Gastrocnemius medialis (tissue), 4 donors: ENCODE measurements at regions of chr2 and their contacts with region 1.

Region 1: DNA sequence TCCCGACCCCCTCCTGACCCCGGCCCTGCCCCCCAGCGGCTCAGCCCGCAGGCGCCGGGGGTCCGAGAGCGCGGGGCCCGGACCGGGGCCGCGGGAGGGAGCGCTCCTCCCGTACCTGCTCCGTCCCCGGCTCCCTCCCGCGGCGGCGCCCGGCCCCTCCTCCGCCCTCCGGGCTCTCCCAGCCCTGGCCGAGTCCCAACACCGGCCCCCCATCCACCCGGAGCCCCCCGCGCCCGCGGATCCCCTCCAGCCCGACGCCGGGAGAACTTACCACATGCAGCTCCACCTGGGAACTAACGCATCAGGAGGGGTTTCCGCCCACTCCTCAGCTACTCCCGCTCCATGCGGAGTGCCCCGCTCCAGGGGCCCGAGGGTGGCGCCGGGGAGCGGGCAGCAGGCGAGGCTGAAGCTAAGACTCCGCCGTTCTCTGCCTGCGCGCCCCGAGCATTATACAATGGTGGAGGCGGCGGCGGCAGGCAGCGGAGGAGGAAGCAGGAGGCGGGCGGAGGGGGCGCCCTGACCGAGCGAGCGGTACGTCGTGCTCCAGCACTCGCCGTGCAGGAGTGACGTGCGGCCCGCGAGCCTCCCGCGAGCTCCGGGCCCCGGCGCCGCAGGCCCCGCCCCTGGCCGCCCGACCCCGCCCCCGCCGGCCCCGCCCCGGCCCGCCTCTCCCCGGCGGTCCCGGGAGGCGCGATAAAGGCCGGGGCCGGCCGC is at the start of gene SERTAD2:
- DNase-seq: peak; percentile 74 to 84
- ATAC-seq: peak; percentile 64 to 70
- H3K4me3 ChIP-seq: peak within 1 kb of the TSS; percentile 87 to 95 (median 90)
- H3K27ac ChIP-seq: peak within 1 kb of the TSS; percentile 96 to 100 (median 99)
- H3K4me1 ChIP-seq: peaks cover 41% of the 10 kb centered on the region in 2 donors
- H3K27me3 ChIP-seq: no peaks in the 10 kb centered on the region
- CTCF ChIP-seq: peak in 2 of 5 experiments; percentile 17 to 35
- POLR2A ChIP-seq: peak; percentile 92 to 95
- total RNA-seq, gene SERTAD2: 7.3 to 10.6 (median 8.7) TPM

Region 2: DNA sequence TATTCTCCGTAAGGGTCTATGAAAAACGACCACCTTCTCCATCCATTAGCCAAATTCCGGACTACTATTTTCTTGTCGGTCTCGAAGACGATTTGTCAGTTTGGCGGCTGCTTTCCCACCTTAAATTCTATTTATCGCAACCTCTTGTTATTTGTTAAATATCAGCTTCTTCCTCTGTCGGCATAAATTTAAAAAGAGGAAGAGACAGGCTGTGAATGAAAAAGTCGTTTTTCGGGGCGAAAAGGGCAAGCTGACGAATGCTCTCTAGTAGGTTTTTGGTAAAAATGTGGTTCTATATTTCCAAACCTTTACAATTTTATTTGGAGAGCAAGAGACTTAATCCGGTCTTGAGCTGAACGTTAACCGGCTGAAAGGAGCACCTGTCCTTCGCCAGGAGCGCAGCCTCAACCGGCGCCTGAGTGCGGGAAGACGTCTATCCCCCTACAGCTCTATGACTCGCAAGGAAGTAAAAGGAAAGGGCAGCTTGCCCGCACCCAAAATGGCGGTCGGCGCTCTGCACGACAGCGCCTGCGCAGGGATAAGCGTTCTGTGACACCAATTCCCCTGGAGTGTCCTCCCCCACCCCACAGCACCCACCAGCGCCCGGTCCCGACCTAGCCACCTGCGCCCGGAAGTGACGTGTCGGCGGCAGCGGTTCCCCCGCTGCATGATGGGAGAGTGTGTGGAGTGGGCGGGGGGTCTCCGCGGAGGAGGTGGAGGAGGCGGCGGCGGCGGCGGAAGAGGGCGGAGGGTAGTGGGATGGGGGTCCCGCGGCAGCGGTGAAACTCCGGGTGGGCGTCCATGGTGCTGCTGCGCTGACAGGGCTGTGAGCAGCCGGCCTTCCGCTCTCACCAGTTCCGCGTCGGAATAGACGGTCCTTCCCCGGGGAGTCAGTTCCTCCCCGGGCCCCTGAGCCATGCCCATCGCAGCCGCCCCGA is 129.6 kb before region 1 on chr2 and contains the start of gene AFTPH:
- in situ Hi-C with region 1: loop called in 1 of 4 experiments (anchors 10 kb)
- intact Hi-C with region 1: loop called (anchors 2 kb)
- DNase-seq: peak; percentile 99
- ATAC-seq: peak; percentile 94 to 95
- H3K4me3 ChIP-seq: peak within 1 kb of the TSS; percentile 86 to 97 (median 90)
- H3K27ac ChIP-seq: peak within 1 kb of the TSS; percentile 91 to 97 (median 94)
- H3K4me1 ChIP-seq: peaks cover 29 to 32% of the 10 kb centered on the region in 2 donors
- H3K27me3 ChIP-seq: no peaks in the 10 kb centered on the region
- CTCF ChIP-seq: no peak
- POLR2A ChIP-seq: peak; percentile 93 to 97
- total RNA-seq, gene AFTPH: 13.9 to 18.1 (median 14.8) TPM

Region 3: GRCh38 chr2:64779117-64779690 is 125.7 kb after region 1 on chr2:
- in situ Hi-C with region 1: no loop called
- intact Hi-C with region 1: no loop called
- DNase-seq: no peak
- ATAC-seq: no peak
- H3K4me3 ChIP-seq: no peak overlapping the region
- H3K27ac ChIP-seq: no peak overlapping the region
- H3K4me1 ChIP-seq: no peaks in the 10 kb centered on the region
- H3K27me3 ChIP-seq: no peaks in the 10 kb centered on the region
- CTCF ChIP-seq: no peak
- POLR2A ChIP-seq: no peak

Region 4: GRCh38 chr2:64859312-64860212 is 206.1 kb after region 1 on chr2:
- in situ Hi-C with region 1: loop called in 3 of 4 experiments (anchors 5 to 10 kb)
- intact Hi-C with region 1: loop called (anchors 1 kb)
- DNase-seq: peak; percentile 93 to 98
- ATAC-seq: peak; percentile 85 to 86
- H3K4me3 ChIP-seq: peak overlapping the region; percentile 55 to 74 (median 58)
- H3K27ac ChIP-seq: peak overlapping the region; percentile 87 to 98 (median 96)
- H3K4me1 ChIP-seq: peaks cover 26 to 38% of the 10 kb centered on the region in 2 donors
- H3K27me3 ChIP-seq: no peaks in the 10 kb centered on the region
- CTCF ChIP-seq: peak in 2 of 5 experiments; percentile 8 to 26
- POLR2A ChIP-seq: peak; percentile 32 to 54

Region 5: DNA sequence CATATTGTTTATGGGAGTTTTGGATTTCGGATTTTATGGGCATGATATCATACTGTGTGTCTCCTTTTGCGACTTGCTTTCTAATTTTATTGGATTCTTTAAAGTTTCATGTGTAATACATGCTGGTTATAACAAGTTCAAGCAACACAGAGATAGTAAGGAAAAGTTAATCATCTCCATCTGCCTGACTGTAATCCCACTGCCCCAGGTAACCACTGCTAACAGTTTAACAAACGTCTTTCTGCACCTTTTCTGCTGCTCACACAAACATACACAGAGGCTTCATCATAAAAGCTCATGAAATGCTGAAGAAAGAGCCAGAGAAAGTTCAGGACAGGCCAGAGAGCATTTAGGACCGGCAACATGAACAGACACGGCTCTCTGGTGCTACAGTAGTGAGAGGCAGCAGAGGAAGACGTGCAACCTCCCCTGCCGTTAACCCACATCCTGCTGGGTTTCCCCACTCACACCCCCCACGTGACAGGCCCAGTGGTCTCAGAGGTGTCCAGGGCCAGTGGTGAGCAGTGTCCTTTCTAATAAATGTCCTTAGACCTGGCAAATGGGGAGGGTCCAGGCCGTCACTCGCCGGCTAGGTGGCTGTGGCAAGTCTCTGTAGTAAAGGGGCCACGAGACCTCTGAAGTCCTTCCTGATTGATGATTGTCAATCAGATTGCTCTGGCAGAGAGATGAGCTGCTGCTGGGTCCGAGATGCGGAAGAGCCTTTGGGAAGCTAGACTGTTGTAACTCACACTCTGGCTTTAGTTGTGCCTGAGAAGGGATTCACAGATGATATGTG is 292.7 kb after region 1 on chr2:
- in situ Hi-C with region 1: no loop called
- intact Hi-C with region 1: no loop called
- DNase-seq: no peak
- ATAC-seq: no peak
- H3K4me3 ChIP-seq: no peak overlapping the region
- H3K27ac ChIP-seq: no peak overlapping the region
- H3K4me1 ChIP-seq: peaks cover 34 to 39% of the 10 kb centered on the region in 2 donors
- H3K27me3 ChIP-seq: no peaks in the 10 kb centered on the region
- CTCF ChIP-seq: no peak
- POLR2A ChIP-seq: no peak

Region 6: DNA sequence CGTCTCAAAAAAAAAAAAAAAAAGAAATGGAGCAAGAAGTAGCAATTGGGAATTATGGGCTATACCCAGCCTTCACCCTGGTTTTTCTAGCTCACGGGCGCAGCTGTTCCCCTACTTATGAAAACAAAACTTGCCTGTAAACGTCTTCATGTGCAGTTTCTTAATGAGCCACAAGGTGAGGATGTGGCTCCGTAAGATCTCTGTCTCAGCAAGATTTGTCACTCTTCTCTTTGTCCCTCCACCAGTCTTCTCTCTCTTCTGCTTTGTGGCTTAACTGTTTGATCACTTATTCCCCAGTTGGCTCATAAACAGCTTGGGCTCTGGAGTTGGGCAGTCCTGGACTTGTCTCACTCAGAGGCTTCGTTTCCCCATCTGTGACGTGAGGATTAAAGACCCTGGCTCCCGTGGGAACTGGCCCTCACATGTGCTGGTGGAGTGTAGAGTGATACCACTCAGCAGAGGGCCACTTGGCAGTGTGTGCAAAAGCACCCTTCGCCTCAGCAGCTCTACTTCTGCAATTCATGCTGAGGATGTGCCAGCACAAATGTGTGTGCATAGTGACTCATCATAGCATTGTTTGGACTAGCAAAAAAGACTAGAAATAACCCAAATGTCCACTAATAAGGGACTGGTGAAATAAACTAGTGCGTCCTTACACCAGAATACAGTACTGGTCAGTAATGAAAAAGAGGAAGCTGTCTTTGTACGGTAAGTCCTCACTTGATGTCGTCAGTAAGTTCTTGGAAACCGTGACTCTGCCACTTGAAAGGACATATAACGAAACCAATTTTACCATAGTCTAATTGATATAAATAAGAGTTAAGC is 411.4 kb after region 1 on chr2:
- in situ Hi-C with region 1: no loop called
- intact Hi-C with region 1: loop called (anchors 5 kb)
- DNase-seq: peak; percentile 50 to 78
- ATAC-seq: peak; percentile 60 to 73
- H3K4me3 ChIP-seq: peak overlapping the region in 3 of 4 donors; percentile 3 to 34 (median 23)
- H3K27ac ChIP-seq: peak overlapping the region; percentile 90 to 96 (median 92)
- H3K4me1 ChIP-seq: peaks cover 93 to 95% of the 10 kb centered on the region in 2 donors
- H3K27me3 ChIP-seq: no peaks in the 10 kb centered on the region
- CTCF ChIP-seq: peak; percentile 76 to 90 (median 83)
- POLR2A ChIP-seq: peak; percentile 10 to 56

Region 7: DNA sequence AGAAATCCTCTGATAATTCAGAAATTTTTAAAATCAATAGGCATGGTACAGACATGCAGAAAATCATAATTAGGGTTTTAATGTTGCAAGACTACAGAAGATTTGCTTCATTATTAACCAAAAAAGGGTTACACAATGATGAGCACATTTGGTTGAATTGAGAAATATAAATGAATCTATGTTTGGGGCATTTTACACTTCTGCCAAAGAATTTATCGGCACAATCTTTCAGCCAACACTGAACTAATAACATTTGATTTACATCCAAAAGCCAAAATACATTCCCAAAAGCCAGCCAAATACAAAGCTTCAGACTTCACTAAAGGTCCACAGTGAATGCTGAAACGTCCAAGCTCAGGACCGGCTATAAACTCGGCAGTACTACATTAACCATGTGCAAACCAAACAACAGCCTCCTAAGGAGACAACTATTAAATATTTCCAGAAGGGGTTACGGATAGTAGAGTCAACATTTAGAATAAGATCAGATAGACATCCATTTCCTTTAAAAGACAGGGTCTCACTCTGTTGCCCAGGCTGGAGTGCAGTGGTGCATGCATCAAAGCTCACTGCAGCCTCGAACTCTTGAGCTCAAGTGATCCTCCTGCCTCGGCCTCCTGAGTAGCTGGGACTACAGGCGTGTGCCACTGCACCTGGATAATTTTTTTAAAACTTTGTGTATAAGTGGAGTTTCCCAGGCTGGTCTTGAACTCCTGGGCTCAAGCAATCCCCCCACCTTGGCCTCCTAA is 749.4 kb after region 1 on chr2:
- in situ Hi-C with region 1: no loop called
- intact Hi-C with region 1: no loop called
- DNase-seq: no peak
- ATAC-seq: peak in 1 of 2 donors; percentile 49
- H3K4me3 ChIP-seq: no peak overlapping the region
- H3K27ac ChIP-seq: no peak overlapping the region
- H3K4me1 ChIP-seq: peaks cover 0 to 5% of the 10 kb centered on the region in 2 donors
- H3K27me3 ChIP-seq: no peaks in the 10 kb centered on the region
- CTCF ChIP-seq: no peak
- POLR2A ChIP-seq: no peak